Heart right ventricle (tissue), 16 donors: ENCODE measurements at regions of chr20 and their contacts with region 1.

Region 1: DNA sequence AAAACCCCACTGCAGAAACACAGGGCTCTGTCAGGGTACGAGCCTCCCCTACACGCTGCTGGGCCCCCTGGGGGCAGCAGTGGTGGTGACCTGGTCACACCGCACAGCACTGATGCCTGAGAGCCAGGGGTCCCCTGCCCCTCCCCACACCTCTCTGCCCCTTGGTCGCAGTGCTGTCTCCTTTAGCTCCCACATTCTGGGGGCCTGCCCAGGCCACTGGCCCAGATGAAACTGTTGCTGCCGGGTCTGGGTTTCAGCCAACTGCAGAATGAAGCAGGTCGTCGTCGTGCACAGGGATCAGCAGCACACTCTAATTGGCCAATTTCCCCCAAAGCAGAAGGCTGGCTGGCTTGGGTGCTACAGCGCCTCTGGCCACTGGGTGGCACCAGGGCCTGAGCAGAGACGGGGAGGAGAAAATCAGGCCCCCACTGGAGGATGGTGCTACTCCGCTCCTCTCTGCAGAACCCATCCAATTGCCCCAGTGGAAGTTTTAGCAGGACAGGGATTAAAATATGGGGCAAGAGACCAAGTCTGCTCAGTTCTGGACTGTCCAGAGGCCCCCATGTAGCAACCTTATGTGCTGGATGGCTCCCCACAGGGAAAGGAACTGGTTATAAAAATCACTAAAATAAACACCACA is 26.1 kb downstream of the DIDO1 start:
- DNase-seq: peak; percentile 66 to 72
- ATAC-seq: peak; percentile 87 to 95 (median 91)
- H3K4me3 ChIP-seq: no peak overlapping the region
- H3K27ac ChIP-seq: no peak overlapping the region
- H3K4me1 ChIP-seq: peaks cover 7 to 36% (median 17%) of the 10 kb centered on the region in 9 donors
- H3K27me3 ChIP-seq: no peaks in the 10 kb centered on the region
- CTCF ChIP-seq: peak; percentile 80 to 93 (median 89)

Region 2: DNA sequence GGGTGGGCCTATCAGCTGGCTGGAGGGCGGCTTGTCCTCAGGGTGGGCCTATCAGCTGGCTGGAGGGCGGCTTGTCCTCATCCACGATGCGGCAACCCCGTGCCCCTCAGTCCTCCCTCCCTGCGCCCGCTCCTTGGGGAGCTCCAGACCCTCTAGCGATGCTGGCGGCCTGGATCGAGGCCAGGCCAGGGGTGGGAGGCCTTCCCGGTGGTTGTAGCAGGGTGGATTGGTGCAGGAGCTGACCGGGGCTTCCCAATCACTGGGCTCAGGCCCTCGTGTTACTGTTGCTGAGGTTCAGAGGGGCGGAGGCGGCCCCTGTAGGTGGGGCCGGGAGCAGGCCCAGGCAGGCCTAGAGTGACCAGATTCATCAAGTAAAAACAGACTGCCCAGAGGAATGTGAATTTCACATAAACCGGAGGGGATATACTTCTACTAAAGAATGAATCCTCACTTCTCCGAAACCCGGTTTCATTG is 61.2 kb after region 1 on chr20:
- intact Hi-C with region 1: no loop called
- DNase-seq: no peak
- ATAC-seq: peak in 3 of 8 donors; percentile 14 to 64 (median 41)
- H3K4me3 ChIP-seq: peak overlapping the region in 3 of 10 donors; percentile 28 to 33 (median 33)
- H3K27ac ChIP-seq: peak overlapping the region in 1 of 10 donors; percentile 48
- H3K4me1 ChIP-seq: peaks cover 0 to under 1% (median 0%) of the 10 kb centered on the region in 9 donors
- H3K27me3 ChIP-seq: no peaks in the 10 kb centered on the region
- CTCF ChIP-seq: no peak

Region 3: DNA sequence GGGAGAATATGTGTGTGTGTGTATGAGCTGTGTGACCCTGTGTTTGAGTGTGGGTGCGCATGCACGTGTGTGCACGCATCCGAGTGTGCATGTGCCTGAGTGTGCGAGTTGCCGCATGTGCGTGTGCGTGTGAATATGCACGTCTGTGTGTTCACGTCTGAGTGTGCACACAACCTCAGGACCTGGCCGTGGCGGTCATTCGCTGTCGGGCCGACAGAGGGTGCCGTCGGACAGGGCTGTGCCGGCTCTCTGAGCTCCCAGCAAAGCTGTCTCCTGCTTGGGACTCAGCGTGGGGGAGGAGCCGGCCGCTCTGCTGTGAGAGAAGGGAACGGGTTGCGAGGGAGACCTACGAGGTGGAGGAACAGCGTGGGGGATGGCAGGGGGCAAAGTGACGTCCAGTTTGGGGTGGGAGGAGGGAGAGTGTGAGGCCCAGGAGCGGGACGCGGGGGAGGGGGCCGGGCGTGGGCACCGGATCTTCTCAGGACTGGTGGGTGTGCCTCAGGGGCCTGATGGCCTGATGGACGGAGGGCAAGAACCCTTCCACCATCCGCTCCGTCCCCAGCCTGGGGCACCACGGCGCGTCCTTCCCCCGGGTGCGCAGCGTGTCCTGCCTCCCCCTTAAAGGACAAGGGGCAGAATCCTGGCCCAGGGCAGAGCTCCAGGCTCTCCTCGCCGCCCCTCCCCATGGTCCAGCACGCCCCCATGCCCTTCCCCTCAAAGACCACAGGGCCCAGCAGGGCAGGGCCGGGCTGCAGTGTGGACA is 72.3 kb after region 1 on chr20:
- intact Hi-C with region 1: loop called in 1 of 10 experiments (anchors 1 kb)
- DNase-seq: peak; percentile 85 to 87
- ATAC-seq: peak; percentile 88 to 96 (median 94)
- H3K4me3 ChIP-seq: peak overlapping the region in 9 of 10 donors; percentile 13 to 45 (median 30)
- H3K27ac ChIP-seq: no peak overlapping the region
- H3K4me1 ChIP-seq: peaks cover 0 to 12% (median 8%) of the 10 kb centered on the region in 9 donors
- H3K27me3 ChIP-seq: peaks cover 14 to 80% (median 65%) of the 10 kb centered on the region in 7 donors
- CTCF ChIP-seq: peak; percentile 79 to 92 (median 85)